GM23248 (cell line): ENCODE measurements at regions of chr13 and their contacts with region 1.

Region 1: DNA sequence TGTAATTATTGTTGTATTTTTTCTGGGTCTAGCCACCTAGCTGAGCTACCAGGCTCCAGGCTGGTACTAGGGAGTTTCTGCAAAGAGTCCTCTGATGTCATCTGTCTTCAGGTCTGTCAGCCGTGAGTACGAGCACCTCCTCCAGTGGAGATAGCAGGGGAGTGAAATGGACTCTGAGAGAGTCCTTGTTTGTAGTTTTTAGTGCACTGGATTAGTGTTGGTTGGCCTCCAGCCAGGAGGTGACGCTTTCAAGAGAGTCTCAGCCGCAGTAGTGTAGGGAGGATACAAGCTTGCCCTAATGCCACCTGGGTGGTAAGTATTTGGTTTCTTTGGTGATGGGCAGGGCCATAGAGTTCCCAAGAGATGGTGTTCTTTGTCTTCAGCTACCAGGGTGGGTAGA is 384.8 kb downstream of the SLC7A1 start:
- DNase-seq: no peak
- H3K4me3 ChIP-seq: no peak overlapping the region
- H3K27ac ChIP-seq: no peak overlapping the region
- H3K4me1 ChIP-seq: no peaks in the 10 kb centered on the region
- H3K27me3 ChIP-seq: no peaks in the 10 kb centered on the region

Region 2: GRCh38 chr13:27635266-27635665 is 1575.4 kb before region 1 on chr13:
- in situ Hi-C with region 1: no loop called
- DNase-seq: no peak
- H3K4me3 ChIP-seq: no peak overlapping the region
- H3K27ac ChIP-seq: no peak overlapping the region
- H3K4me1 ChIP-seq: peaks cover 13% of the 10 kb centered on the region
- H3K27me3 ChIP-seq: no peaks in the 10 kb centered on the region

Region 3: GRCh38 chr13:29354377-29354776 is 143.7 kb after region 1 on chr13:
- in situ Hi-C with region 1: loop called (anchors 5 kb)
- DNase-seq: no peak
- H3K4me3 ChIP-seq: no peak overlapping the region
- H3K27ac ChIP-seq: no peak overlapping the region
- H3K4me1 ChIP-seq: no peaks in the 10 kb centered on the region
- H3K27me3 ChIP-seq: peaks cover 44% of the 10 kb centered on the region

Region 4: DNA sequence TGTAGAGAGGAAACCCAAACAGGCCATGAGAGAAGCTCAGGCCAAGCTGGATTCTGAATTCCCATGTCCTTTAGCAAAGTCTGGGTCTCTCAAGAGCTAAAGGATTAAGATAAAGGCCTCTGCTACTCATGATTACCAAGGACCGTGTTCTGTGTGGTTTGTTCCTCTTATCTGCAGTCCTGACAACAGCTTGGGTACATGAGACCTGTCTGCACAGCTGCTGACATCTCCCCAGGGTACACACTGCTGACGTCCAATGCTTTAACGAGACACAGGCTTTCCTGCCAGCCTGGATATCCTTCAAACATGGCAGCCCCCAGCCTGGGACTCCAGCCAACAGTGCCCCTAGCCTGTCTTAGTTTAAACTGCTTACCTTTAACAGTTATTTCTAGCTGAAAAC is 173.8 kb after region 1 on chr13:
- in situ Hi-C with region 1: no loop called
- DNase-seq: no peak
- H3K4me3 ChIP-seq: no peak overlapping the region
- H3K27ac ChIP-seq: no peak overlapping the region
- H3K4me1 ChIP-seq: no peaks in the 10 kb centered on the region
- H3K27me3 ChIP-seq: peaks cover 17% of the 10 kb centered on the region; the same call in 1 of the 2 replicates